SK-N-SH (cell line): ENCODE measurements at regions of chr3 and their contacts with region 1.

Region 1: DNA sequence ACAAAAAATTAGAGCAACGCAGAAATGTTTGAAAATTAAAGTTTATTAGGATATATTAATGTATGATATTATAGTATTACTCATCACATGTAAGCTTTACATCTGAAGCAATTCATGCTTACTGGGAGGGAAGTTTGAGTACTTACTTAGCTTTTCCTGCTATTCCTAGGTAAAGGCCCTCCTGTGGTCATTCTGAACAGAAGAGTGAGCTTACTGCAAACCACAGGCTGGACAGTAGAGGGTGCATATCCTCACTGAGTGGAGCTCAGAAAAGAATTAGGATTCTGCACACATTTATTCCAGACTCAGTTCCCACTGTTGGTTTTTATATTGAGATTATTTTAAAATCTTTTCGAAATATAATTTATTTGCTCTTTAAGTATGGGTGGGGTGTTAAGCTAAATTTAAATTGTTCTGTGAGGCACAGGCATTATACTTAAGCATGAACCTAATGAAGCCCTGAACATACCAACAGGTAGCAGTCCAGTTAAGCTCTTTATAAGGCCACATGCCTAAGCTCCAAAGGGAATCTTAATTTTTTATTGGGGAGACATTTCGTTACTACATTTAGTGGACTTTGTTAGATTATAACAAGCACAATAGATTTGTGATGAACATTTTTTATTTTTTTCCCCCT is 10.2 kb downstream of the MRPS22 start:
- DNase-seq: peak; percentile 53
- H3K4me3 ChIP-seq: no peak overlapping the region; a peak in 1 of 4 replicates
- H3K27ac ChIP-seq: no peak overlapping the region; a peak in 1 of 4 replicates
- H3K4me1 ChIP-seq: peaks cover 0 to 6% of the 10 kb centered on the region in 2 experiments; a peak in 1 of 4 replicates
- H3K27me3 ChIP-seq: no peaks in the 10 kb centered on the region
- CTCF ChIP-seq: peak; percentile 80
- EP300 ChIP-seq: no peak
- RAD21 ChIP-seq: peak; percentile 52

Region 2: GRCh38 chr3:139374099-139374498 is 20.1 kb after region 1 on chr3:
- CTCF ChIA-PET with region 1: interaction called, 15 read pairs
- POLR2A ChIA-PET with region 1: no interaction called
- DNase-seq: no peak
- H3K4me3 ChIP-seq: no peak overlapping the region
- H3K27ac ChIP-seq: no peak overlapping the region
- H3K4me1 ChIP-seq: peaks cover 0 to 2% of the 10 kb centered on the region in 2 experiments; a peak in 1 of 4 replicates
- H3K27me3 ChIP-seq: no peaks in the 10 kb centered on the region
- CTCF ChIP-seq: no peak
- EP300 ChIP-seq: no peak
- RAD21 ChIP-seq: no peak

Region 3: GRCh38 chr3:139389458-139390209 is 35.6 kb after region 1 on chr3 and contains the start of gene COPB2:
- CTCF ChIA-PET with region 1: interaction called, 21 read pairs
- POLR2A ChIA-PET with region 1: no interaction called
- DNase-seq: peak; percentile 94
- H3K4me3 ChIP-seq: peak within 1 kb of the TSS; percentile 86 to 98
- H3K27ac ChIP-seq: peak within 1 kb of the TSS; percentile 97 to 98
- H3K4me1 ChIP-seq: peaks cover 13 to 15% of the 10 kb centered on the region in 2 experiments; a peak in 3 of 4 replicates
- H3K27me3 ChIP-seq: no peaks in the 10 kb centered on the region
- CTCF ChIP-seq: no peak
- EP300 ChIP-seq: no peak
- RAD21 ChIP-seq: no peak
- polyA plus RNA-seq, gene COPB2: 69.7 and 98.7 TPM in 2 replicates